HCT116 (cell line): ENCODE measurements at regions of chr2 and their contacts with region 1.

Region 1: GRCh38 chr2:227238238-227239237 is 74.1 kb downstream of the COL4A3 start:
- DNase-seq: peak; percentile 41
- ATAC-seq: peak; percentile 79
- H3K4me3 ChIP-seq: no peak overlapping the region
- H3K27ac ChIP-seq: no peak overlapping the region
- H3K4me1 ChIP-seq: no peaks in the 10 kb centered on the region
- H3K27me3 ChIP-seq: no peaks in the 10 kb centered on the region
- CTCF ChIP-seq: peak; percentile 85 to 98 (median 94)
- POLR2A ChIP-seq: no peak
- RAD21 ChIP-seq: peak; percentile 92

Region 2: GRCh38 chr2:226984750-226985582 is 253.6 kb before region 1 on chr2:
- CTCF ChIA-PET with region 1: no interaction called
- POLR2A ChIA-PET with region 1: no interaction called
- RAD21 ChIA-PET with region 1: no interaction called
- intact Hi-C with region 1: no loop called
- DNase-seq: peak; percentile 56
- ATAC-seq: peak; percentile 65
- H3K4me3 ChIP-seq: no peak overlapping the region
- H3K27ac ChIP-seq: peak overlapping the region; percentile 57
- H3K4me1 ChIP-seq: peaks cover 47 to 50% of the 10 kb centered on the region in 2 experiments
- H3K27me3 ChIP-seq: no peaks in the 10 kb centered on the region
- CTCF ChIP-seq: peak; percentile 56 to 83 (median 68); a peak in 5 of 6 replicates
- POLR2A ChIP-seq: no peak
- RAD21 ChIP-seq: peak; percentile 95

Region 3: DNA sequence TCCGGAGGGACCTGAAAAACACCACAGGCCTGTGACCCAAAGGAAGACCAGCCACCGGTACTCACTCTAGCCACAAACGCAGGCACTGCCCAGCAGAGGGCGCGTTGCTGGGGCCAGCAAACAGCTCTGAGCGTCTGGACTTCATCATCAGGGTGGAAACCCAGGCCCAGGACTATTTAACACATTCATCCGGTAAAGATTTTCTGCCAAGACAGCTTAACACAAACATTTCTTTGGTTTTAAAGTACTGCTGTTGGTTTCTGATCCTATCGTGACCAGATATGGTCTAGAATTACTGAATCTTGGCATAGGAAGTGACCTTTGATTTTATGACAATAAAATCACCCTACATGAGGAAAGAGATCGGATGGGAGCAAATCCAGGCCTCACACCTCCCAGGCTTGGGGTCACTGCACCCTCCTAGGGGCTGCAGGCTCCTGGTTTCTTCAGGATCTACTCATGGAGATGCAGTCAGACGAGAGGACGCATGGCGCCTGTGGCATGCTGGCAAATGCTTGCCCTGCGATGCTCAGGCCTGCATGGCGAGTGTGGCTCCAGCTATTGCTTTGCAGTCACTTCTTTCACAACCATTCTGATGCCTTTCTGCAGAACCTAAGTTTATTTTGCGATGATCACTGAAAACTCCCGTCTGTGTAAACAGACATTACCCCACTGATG is 204.9 kb before region 1 on chr2:
- CTCF ChIA-PET with region 1: interaction called, 3 read pairs
- POLR2A ChIA-PET with region 1: no interaction called
- RAD21 ChIA-PET with region 1: no interaction called
- intact Hi-C with region 1: loop called (anchors 10 kb)
- DNase-seq: peak; percentile 4
- ATAC-seq: peak; percentile 100
- H3K4me3 ChIP-seq: no peak overlapping the region
- H3K27ac ChIP-seq: no peak overlapping the region
- H3K4me1 ChIP-seq: no peaks in the 10 kb centered on the region
- H3K27me3 ChIP-seq: no peaks in the 10 kb centered on the region
- CTCF ChIP-seq: peak; percentile 42 to 91 (median 89); a peak in 5 of 6 replicates
- POLR2A ChIP-seq: no peak
- RAD21 ChIP-seq: peak; percentile 49

Region 4: DNA sequence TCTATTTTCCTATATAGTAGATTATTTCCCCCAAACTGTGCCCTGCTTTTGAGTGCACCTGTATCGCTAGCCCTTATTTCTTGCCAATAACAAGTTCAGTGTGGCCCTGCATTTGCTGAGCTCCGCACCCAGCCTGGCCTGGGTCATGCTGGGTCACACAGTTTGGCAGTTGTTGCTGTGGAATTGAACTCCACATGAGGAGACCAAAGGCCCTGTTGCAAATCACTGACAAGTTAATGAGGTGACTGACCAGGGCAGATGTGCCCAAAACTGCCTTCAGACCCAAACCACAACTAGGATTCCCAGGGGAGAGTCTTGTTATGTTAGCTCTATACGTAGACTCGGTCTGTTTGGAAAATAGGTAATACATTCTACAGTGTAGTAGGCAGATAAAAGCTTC is 105.6 kb before region 1 on chr2:
- CTCF ChIA-PET with region 1: interaction called, 75 read pairs
- POLR2A ChIA-PET with region 1: interaction called, 3 read pairs
- RAD21 ChIA-PET with region 1: interaction called, 3 to 4 read pairs
- intact Hi-C with region 1: loop called (anchors 1 kb)
- DNase-seq: no peak
- ATAC-seq: no peak
- H3K4me3 ChIP-seq: no peak overlapping the region
- H3K27ac ChIP-seq: no peak overlapping the region
- H3K4me1 ChIP-seq: no peaks in the 10 kb centered on the region
- H3K27me3 ChIP-seq: no peaks in the 10 kb centered on the region
- CTCF ChIP-seq: no peak
- POLR2A ChIP-seq: no peak
- RAD21 ChIP-seq: no peak

Region 5: GRCh38 chr2:227191367-227191766 is 47.2 kb before region 1 on chr2:
- CTCF ChIA-PET with region 1: interaction called, 10 read pairs
- POLR2A ChIA-PET with region 1: no interaction called
- RAD21 ChIA-PET with region 1: no interaction called
- intact Hi-C with region 1: no loop called
- DNase-seq: peak; percentile 33
- ATAC-seq: peak; percentile 83
- H3K4me3 ChIP-seq: no peak overlapping the region
- H3K27ac ChIP-seq: no peak overlapping the region
- H3K4me1 ChIP-seq: peaks cover 12 to 37% of the 10 kb centered on the region in 2 experiments
- H3K27me3 ChIP-seq: no peaks in the 10 kb centered on the region
- CTCF ChIP-seq: peak in 2 of 3 experiments; percentile 39 to 47; a peak in 4 of 6 replicates
- POLR2A ChIP-seq: no peak
- RAD21 ChIP-seq: no peak

Region 6: GRCh38 chr2:227228061-227228667 is 10.4 kb before region 1 on chr2:
- CTCF ChIA-PET with region 1: interaction called, 19 read pairs
- POLR2A ChIA-PET with region 1: no interaction called
- RAD21 ChIA-PET with region 1: no interaction called
- intact Hi-C with region 1: no loop called
- DNase-seq: no peak
- ATAC-seq: peak; percentile 55
- H3K4me3 ChIP-seq: no peak overlapping the region
- H3K27ac ChIP-seq: no peak overlapping the region
- H3K4me1 ChIP-seq: peaks cover 0 to 7% of the 10 kb centered on the region in 2 experiments; a peak in 1 of 4 replicates
- H3K27me3 ChIP-seq: no peaks in the 10 kb centered on the region
- CTCF ChIP-seq: no peak
- POLR2A ChIP-seq: no peak
- RAD21 ChIP-seq: no peak

Region 7: GRCh38 chr2:227248876-227249275 is 10.3 kb after region 1 on chr2:
- CTCF ChIA-PET with region 1: interaction called, 16 read pairs
- POLR2A ChIA-PET with region 1: no interaction called
- RAD21 ChIA-PET with region 1: no interaction called
- intact Hi-C with region 1: no loop called
- DNase-seq: no peak
- ATAC-seq: no peak
- H3K4me3 ChIP-seq: no peak overlapping the region
- H3K27ac ChIP-seq: no peak overlapping the region
- H3K4me1 ChIP-seq: no peaks in the 10 kb centered on the region
- H3K27me3 ChIP-seq: no peaks in the 10 kb centered on the region
- CTCF ChIP-seq: no peak
- POLR2A ChIP-seq: no peak
- RAD21 ChIP-seq: no peak